ENCODE measurements at regions of chr22 and their contacts with region 1.

Region 1: GRCh38 chr22:33867115-33867866 is 53.0 kb downstream of the LARGE1 start:
- DNase-seq: no peak
- ATAC-seq: peak in 5 of 8 donors; percentile 40 to 65 (median 63)
- H3K4me3 ChIP-seq: no peak overlapping the region
- H3K27ac ChIP-seq: peak overlapping the region; percentile 15 to 87 (median 82)
- H3K4me1 ChIP-seq: peaks cover 12 to 87% (median 50%) of the 10 kb centered on the region in 9 donors
- H3K27me3 ChIP-seq: no peaks in the 10 kb centered on the region
- CTCF ChIP-seq: peak in 2 of 9 donors; percentile 30 to 33

Region 2: DNA sequence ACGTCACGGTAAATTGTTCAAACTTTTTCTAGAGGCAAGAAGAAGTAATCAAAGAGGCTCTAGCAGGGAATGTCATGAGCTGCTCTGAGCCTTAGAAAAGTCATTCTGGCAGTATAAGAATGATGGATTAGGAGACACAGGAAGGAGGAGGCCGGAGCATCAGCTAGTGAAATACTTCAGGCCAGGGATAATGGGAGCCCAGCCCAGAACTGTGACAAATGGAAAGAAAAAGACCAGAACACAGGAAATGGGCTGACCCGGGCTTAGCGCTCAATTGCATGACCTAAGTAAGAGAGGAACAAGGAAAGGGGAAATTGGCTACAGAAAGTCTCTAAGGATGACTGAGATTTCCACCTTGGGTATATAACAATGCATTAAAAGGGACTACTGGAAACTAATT is 55.6 kb before region 1 on chr22:
- intact Hi-C with region 1: loop called in 1 of 10 experiments (anchors 10 kb)
- DNase-seq: peak; percentile 23 to 81
- ATAC-seq: peak; percentile 60 to 93 (median 84)
- H3K4me3 ChIP-seq: no peak overlapping the region
- H3K27ac ChIP-seq: peak overlapping the region in 9 of 10 donors; percentile 46 to 70 (median 53)
- H3K4me1 ChIP-seq: peaks cover 0 to 48% (median 32%) of the 10 kb centered on the region in 9 donors
- H3K27me3 ChIP-seq: no peaks in the 10 kb centered on the region
- CTCF ChIP-seq: no peak

Region 3: DNA sequence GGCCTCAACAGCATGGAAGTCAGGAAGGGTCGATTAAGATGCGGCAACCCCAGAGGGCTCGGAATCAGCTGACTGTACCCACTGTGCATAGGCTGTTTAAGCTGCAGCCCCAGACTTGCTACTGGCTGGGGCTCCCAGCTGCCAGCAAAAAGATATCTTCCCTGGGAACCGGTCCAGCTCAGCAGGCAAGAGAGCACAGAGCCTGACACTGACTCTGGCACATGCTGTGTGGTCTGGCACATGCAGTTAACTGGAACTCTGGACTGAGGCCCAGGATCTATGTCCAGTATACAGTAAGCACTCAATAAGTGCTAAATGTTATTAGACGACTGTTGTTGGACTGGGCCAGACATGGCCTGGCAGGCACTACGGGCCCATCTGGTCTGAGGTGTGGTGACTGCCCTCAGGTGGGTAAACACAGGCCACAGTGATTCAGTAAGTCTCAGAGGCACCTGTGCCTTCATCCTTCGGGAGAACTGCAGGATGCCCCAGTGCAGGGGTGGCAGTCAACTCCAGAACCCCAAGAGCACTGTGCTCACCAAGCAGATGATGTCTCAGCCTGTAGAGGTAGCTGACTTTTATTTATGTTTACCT is 34.6 kb before region 1 on chr22:
- intact Hi-C with region 1: loop called in 1 of 10 experiments (anchors 5 kb)
- DNase-seq: peak; percentile 43 to 70
- ATAC-seq: peak; percentile 66 to 95 (median 89)
- H3K4me3 ChIP-seq: no peak overlapping the region
- H3K27ac ChIP-seq: peak overlapping the region in 7 of 10 donors; percentile 16 to 73 (median 69)
- H3K4me1 ChIP-seq: peaks cover 8 to 83% (median 48%) of the 10 kb centered on the region in 9 donors
- H3K27me3 ChIP-seq: no peaks in the 10 kb centered on the region
- CTCF ChIP-seq: no peak

Measured in heart right ventricle (tissue), 16 donors.